HepG2 (cell line): ENCODE measurements at regions of chr12 and their contacts with region 1.

Region 1: DNA sequence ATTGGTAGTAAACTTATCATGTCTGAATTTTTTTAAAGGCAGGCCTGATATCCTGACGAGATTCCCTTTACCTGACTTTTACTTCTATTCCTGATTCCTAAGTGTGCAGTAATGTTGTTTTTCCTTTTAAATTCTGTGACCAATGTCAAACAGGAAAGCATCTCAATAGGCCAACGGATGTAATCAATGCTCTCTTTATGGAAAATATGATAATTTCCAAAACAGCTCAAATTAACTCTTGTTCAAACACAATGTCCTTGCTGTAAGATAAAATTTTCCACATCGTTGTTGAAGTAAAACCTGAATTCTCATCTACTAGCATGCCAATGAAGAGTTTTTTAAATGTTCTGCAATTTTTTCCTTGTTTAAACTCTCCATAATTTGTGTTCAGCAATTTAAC is 8.0 kb upstream of the TAS2R31 start:
- DNase-seq: no peak
- ATAC-seq: no peak
- H3K4me3 ChIP-seq: no peak overlapping the region
- H3K27ac ChIP-seq: no peak overlapping the region
- H3K4me1 ChIP-seq: no peaks in the 10 kb centered on the region; the same call in 1 of the 2 replicates
- H3K27me3 ChIP-seq: no peaks in the 10 kb centered on the region
- CTCF ChIP-seq: no peak
- EP300 ChIP-seq: no peak
- POLR2A ChIP-seq: no peak
- RAD21 ChIP-seq: no peak

Region 2: DNA sequence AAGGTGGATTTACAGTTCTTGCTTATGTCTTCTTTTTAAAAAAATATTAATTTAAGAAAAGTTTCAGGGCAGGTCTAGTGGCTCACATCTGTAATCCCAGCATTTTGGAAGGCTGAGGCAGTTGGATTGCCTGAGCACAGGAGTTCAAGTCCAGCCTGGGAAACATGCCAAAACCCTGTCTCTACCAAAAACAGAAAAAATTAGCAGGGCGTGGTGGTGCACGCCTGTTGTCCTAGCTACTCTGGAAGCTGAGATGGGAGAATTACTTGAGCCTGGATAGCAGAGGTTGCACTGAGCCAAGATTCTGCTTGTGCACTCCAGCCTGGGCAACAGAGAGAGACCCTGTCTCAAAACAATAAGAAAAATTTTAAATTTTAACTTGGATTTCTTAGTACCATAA is 28.3 kb after region 1 on chr12:
- CTCF ChIA-PET with region 1: no interaction called
- POLR2A ChIA-PET with region 1: no interaction called
- in situ Hi-C with region 1: no loop called
- intact Hi-C with region 1: loop called (anchors 1 kb)
- DNase-seq: no peak
- ATAC-seq: no peak
- H3K4me3 ChIP-seq: no peak overlapping the region
- H3K27ac ChIP-seq: no peak overlapping the region
- H3K4me1 ChIP-seq: peaks cover 25% of the 10 kb centered on the region
- H3K27me3 ChIP-seq: no peaks in the 10 kb centered on the region; a peak in 1 of 5 replicates
- CTCF ChIP-seq: no peak
- EP300 ChIP-seq: no peak
- POLR2A ChIP-seq: no peak
- RAD21 ChIP-seq: no peak

Region 3: GRCh38 chr12:11092128-11092527 is 53.0 kb after region 1 on chr12 and contains the start of gene TAS2R43:
- CTCF ChIA-PET with region 1: no interaction called
- POLR2A ChIA-PET with region 1: no interaction called
- in situ Hi-C with region 1: loop called (anchors 10 kb)
- intact Hi-C with region 1: no loop called
- DNase-seq: no peak
- ATAC-seq: no peak
- H3K4me3 ChIP-seq: no peak within 1 kb of the TSS
- H3K27ac ChIP-seq: no peak within 1 kb of the TSS
- H3K4me1 ChIP-seq: no peaks in the 10 kb centered on the region
- H3K27me3 ChIP-seq: no peaks in the 10 kb centered on the region
- CTCF ChIP-seq: no peak
- EP300 ChIP-seq: no peak
- POLR2A ChIP-seq: no peak
- RAD21 ChIP-seq: no peak
- total RNA-seq, gene TAS2R43: 1.7 TPM in 1 of 2 replicates, not detected in the other